ENCODE measurements at regions of chr2 and their contacts with region 1.

Region 1: DNA sequence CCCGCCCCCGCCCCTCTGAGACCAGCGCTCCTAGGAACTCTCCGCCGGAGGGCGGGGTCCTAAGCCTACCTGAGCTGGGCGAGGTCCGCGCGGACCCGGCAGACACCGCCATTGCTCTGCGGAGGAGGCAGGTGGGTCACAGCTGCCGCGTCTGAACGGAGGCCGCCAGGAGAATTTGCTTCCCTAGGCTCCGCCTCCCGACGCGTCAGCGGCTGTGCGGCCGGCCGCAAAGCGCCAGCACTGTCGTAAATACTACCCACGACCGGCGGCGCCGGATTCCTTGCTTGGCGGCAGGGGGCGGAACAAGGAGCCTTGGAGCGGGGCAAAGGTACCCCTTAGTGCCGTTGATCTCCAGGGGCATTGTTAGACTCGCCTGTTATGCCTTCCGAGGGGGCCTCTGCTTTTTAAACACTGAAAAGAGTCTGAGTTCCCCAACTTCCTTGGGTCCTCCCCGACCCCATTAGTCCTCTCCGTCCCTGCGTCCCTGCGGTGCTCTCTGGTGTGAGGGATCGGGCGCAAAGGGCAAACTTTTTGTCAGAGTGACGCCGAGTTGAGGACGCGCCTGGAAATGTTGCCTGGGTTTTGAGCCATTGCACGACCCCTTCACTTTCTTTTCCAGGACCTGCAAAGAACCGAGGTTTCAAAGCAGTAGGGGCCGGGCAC is at the start of gene GGCX:
- H3K4me3 Mint-ChIP-seq: peak within 1 kb of the TSS; percentile 97
- H3K27ac Mint-ChIP-seq: peak within 1 kb of the TSS; percentile 99
- H3K4me1 Mint-ChIP-seq: peaks cover 61% of the 10 kb centered on the region
- H3K27me3 Mint-ChIP-seq: no peaks in the 10 kb centered on the region

Region 2: GRCh38 chr2:85577386-85578242 is 16.2 kb after region 1 on chr2 and contains the start of gene VAMP8:
- intact Hi-C with region 1: loop called (anchors 2 kb)
- H3K4me3 Mint-ChIP-seq: peak within 1 kb of the TSS; percentile 97
- H3K27ac Mint-ChIP-seq: peak within 1 kb of the TSS; percentile 99
- H3K4me1 Mint-ChIP-seq: peaks cover 52% of the 10 kb centered on the region
- H3K27me3 Mint-ChIP-seq: no peaks in the 10 kb centered on the region

Region 3: GRCh38 chr2:85602476-85603234 is 41.2 kb after region 1 on chr2 and contains the start of gene TMEM150A:
- intact Hi-C with region 1: loop called (anchors 1 kb)
- H3K4me3 Mint-ChIP-seq: peak within 1 kb of the TSS; percentile 91
- H3K27ac Mint-ChIP-seq: peak within 1 kb of the TSS; percentile 90
- H3K4me1 Mint-ChIP-seq: peaks cover 79% of the 10 kb centered on the region
- H3K27me3 Mint-ChIP-seq: no peaks in the 10 kb centered on the region

Region 4: DNA sequence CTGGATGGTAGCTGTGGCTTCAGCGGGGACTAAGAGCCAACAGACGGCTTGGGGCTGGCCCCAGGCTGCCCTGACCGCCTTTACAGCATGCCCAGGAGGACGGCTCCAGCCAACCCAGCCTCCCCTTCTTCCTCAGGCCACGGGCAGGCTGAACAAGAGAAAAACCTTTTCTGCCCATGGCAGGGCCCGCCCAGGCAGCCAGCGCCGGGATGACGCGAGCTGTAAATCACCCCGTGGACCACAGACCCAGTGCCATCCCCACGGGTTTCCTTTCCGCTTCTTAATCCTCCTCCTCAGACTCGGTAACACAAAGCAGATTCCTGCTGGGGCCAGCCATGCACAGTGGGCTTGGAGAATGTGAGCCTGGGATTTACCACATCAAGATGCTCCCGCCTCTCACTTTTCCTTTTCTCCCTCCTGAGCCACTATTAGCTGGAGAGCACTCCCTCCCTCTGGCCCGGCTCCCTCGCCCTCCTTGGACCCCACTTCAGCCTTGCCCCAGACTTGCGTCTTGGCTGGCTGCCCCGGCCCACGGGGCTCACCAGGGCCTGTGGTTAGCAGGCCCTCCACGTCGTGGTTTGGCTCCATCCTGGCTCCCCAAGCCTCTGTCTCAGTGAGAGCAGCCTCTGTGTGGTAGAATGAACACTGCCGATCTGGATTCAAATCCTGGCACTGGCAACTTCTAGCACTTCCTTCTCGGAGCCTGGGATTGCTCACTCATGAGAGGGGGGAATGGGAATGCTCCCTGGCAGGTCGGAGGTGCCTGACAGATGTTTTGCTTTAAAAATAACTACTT is 223.8 kb after region 1 on chr2:
- intact Hi-C with region 1: no loop called
- H3K4me3 Mint-ChIP-seq: no peak overlapping the region
- H3K27ac Mint-ChIP-seq: no peak overlapping the region
- H3K4me1 Mint-ChIP-seq: peaks cover 22% of the 10 kb centered on the region
- H3K27me3 Mint-ChIP-seq: peaks cover 30% of the 10 kb centered on the region

Measured in dendritic cell treated with granulocyte-macrophage colony-stimulating factor and Interleukin-4, amounts not matched to agents 40 ng/mL and 50 ng/mL, for 4 days (primary cell).